ENCODE measurements at regions of chr19 and their contacts with region 1.

Region 1: GRCh38 chr19:12139885-12140547 is at the start of gene ZNF20:
- DNase-seq: peak; percentile 79 to 91 (median 86)
- H3K4me3 ChIP-seq: peak within 1 kb of the TSS; percentile 67
- H3K4me3 Mint-ChIP-seq: peak within 1 kb of the TSS; percentile 83 to 94 (median 89)
- H3K27ac ChIP-seq: peak within 1 kb of the TSS; percentile 48
- H3K27ac Mint-ChIP-seq: peak within 1 kb of the TSS; percentile 57 to 95 (median 83)
- H3K4me1 ChIP-seq: peaks cover 22% of the 10 kb centered on the region
- H3K4me1 Mint-ChIP-seq: peaks cover 33 to 41% (median 40%) of the 10 kb centered on the region in 3 donors
- H3K27me3 ChIP-seq: no peaks in the 10 kb centered on the region
- H3K27me3 Mint-ChIP-seq: no peaks in the 10 kb centered on the region
- total RNA-seq, gene ZNF20: 2.5 to 3.7 TPM

Region 2: GRCh38 chr19:11798391-11799330 is 341.4 kb before region 1 on chr19 and contains the start of gene ZNF491:
- CTCF ChIA-PET with region 1: interaction called, 14 read pairs
- POLR2A ChIA-PET with region 1: interaction called, 4 read pairs
- DNase-seq: peak; percentile 71 to 86 (median 75)
- H3K4me3 ChIP-seq: peak within 1 kb of the TSS; percentile 67
- H3K4me3 Mint-ChIP-seq: peak within 1 kb of the TSS; percentile 87 to 95 (median 91)
- H3K27ac ChIP-seq: no peak within 1 kb of the TSS
- H3K27ac Mint-ChIP-seq: peak within 1 kb of the TSS; percentile 68 to 92 (median 88)
- H3K4me1 ChIP-seq: peaks cover 12% of the 10 kb centered on the region
- H3K4me1 Mint-ChIP-seq: peaks cover 12 to 20% (median 14%) of the 10 kb centered on the region in 3 donors
- H3K27me3 ChIP-seq: no peaks in the 10 kb centered on the region
- H3K27me3 Mint-ChIP-seq: peaks cover 0 to 5% of the 10 kb centered on the region in 2 donors
- total RNA-seq, gene ZNF491: 1.1 to 1.3 TPM

Region 3: DNA sequence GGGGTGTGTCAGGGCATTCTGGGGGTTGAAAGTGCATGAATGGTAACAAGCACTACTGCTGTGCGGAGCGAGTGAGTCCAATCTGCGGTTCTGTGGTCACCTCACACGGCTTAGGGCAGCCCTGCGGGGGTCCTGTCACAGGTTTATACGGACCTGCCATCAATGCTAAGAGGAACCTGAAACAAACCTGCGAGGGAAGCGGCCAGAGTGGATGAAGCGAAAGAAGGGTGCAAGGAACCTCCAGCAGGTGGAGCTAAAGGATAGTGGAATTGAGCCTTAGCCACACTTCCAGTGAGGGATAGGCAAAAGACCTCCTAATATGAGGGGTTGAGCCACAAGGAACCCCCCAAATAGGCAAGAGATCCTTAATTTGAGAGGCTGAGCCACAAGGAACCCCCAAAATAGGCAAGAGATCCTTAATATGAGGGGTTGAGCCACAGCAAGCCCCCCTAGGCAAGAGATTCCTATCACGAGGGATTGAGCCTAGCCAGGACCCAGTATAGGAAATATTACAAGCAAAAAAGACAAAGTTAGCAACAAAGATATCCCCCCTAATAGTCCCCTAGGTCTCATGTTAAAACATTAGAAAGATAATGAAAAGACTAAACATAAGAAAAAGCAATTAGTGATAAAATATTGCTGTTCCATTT is 258.7 kb before region 1 on chr19:
- CTCF ChIA-PET with region 1: interaction called, 43 read pairs
- POLR2A ChIA-PET with region 1: no interaction called
- DNase-seq: peak; percentile 29 to 69 (median 45)
- H3K4me3 ChIP-seq: no peak overlapping the region
- H3K4me3 Mint-ChIP-seq: peak overlapping the region in 1 of 7 donors; percentile 42
- H3K27ac ChIP-seq: no peak overlapping the region
- H3K27ac Mint-ChIP-seq: peak overlapping the region in 1 of 8 donors; percentile 5
- H3K4me1 ChIP-seq: no peaks in the 10 kb centered on the region
- H3K4me1 Mint-ChIP-seq: peaks cover 0 to 2% (median 2%) of the 10 kb centered on the region in 3 donors
- H3K27me3 ChIP-seq: no peaks in the 10 kb centered on the region
- H3K27me3 Mint-ChIP-seq: peaks cover 0 to 4% of the 10 kb centered on the region in 2 donors

Region 4: DNA sequence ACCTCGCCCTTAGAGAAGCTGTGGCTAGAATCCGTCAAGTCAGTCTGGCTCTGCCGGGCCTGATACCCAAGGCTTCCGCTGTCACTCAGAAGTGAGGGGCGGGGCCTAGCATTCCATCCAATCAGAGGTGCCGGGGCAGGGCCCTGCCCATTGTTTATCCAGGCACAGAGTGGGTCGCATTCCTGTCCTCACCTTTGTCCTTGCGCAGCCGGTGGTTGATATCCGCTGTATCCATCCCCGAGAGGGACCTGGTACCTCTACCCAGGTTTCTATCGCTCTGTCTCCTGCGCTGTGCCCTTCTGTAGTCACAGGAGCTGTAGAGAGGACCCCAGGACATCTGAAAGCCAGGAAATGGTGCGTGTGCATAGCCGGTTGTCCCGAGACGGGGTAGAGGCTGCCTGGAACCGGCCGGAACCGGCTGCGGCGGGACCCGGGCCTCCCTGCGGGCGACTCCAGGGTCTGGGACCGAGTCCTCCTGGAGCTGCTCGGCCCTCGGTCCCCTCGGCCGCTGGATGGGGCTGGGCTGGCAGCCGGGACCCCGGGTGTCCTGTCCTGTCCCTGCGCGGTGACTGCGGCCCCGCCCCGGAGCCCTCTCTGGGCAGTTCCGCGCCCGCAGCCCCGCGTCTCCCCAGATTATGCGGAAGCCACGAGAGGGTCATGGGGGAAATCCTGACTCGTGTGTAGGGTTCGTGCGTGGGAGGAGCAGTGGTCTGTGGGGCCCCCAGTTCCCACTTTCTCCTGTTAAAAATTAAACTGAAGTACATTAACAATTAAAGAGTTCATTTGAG is 175.0 kb before region 1 on chr19 and contains the start of gene ZNF763:
- CTCF ChIA-PET with region 1: interaction called, 12 read pairs
- POLR2A ChIA-PET with region 1: no interaction called
- DNase-seq: peak; percentile 82 to 92 (median 85)
- H3K4me3 ChIP-seq: peak within 1 kb of the TSS; percentile 100
- H3K4me3 Mint-ChIP-seq: peak within 1 kb of the TSS; percentile 90 to 98 (median 97)
- H3K27ac ChIP-seq: peak within 1 kb of the TSS; percentile 91
- H3K27ac Mint-ChIP-seq: peak within 1 kb of the TSS; percentile 89 to 98 (median 95)
- H3K4me1 ChIP-seq: peaks cover 16% of the 10 kb centered on the region
- H3K4me1 Mint-ChIP-seq: peaks cover 26 to 30% (median 29%) of the 10 kb centered on the region in 3 donors
- H3K27me3 ChIP-seq: no peaks in the 10 kb centered on the region
- H3K27me3 Mint-ChIP-seq: no peaks in the 10 kb centered on the region
- total RNA-seq, gene ZNF763: 2.0 to 2.3 TPM

Region 5: DNA sequence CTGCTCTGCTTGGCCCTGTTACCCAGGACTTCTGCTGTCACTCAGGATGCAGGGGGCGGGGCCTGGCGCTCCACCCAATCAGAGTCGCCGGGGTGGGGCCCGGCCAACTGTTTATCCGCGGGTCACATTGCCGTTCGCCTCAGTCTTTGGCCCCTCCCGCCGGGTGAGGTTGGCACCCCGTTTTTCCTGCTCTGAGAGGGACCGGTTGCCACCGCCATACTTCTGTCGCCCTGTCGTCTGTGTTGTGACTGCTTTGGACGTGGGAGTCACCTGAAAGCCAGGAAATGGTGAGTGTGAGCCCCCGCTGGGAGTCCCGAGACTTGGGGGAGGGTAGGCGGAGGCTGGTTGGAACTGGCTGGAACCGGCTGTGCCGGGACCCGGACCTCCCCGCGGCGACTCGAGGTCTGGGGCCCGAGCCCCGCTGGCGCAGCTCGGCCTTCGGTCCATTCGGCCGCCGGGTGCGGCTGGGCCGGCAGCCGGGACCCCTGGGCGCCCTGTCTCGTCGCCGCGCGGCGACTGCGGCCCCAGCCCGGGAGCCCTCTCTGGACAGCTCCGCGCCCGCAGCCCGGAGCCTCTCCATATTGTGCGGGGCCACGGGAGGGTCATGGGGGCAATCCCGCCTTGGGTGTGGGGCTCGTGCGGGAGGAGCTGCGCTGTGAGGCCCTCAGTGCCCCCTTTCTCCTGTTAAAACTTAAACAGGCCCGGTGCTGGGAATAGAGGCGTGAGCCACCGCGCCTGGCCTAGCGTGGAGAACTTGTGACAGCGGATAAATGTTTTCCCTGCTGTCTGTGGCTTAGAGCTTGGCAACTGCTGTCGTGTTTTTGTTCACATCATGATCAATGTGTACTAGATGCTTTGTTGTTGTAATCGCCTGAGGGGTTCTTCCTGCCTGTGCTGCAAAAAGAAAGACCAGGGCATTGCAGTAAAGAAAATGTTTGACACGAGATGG is 75.2 kb before region 1 on chr19 and contains the start of gene ZNF844:
- CTCF ChIA-PET with region 1: interaction called, 15 read pairs
- POLR2A ChIA-PET with region 1: no interaction called
- DNase-seq: peak; percentile 46 to 76 (median 52)
- H3K4me3 ChIP-seq: peak within 1 kb of the TSS; percentile 66
- H3K4me3 Mint-ChIP-seq: peak within 1 kb of the TSS; percentile 80 to 91 (median 85)
- H3K27ac ChIP-seq: peak within 1 kb of the TSS; percentile 51
- H3K27ac Mint-ChIP-seq: peak within 1 kb of the TSS in 6 of 8 donors; percentile 60 to 95 (median 66)
- H3K4me1 ChIP-seq: no peaks in the 10 kb centered on the region
- H3K4me1 Mint-ChIP-seq: peaks cover 5 to 16% (median 14%) of the 10 kb centered on the region in 3 donors
- H3K27me3 ChIP-seq: no peaks in the 10 kb centered on the region
- H3K27me3 Mint-ChIP-seq: no peaks in the 10 kb centered on the region
- total RNA-seq, gene ZNF844: 5.4 to 5.7 TPM

Region 6: DNA sequence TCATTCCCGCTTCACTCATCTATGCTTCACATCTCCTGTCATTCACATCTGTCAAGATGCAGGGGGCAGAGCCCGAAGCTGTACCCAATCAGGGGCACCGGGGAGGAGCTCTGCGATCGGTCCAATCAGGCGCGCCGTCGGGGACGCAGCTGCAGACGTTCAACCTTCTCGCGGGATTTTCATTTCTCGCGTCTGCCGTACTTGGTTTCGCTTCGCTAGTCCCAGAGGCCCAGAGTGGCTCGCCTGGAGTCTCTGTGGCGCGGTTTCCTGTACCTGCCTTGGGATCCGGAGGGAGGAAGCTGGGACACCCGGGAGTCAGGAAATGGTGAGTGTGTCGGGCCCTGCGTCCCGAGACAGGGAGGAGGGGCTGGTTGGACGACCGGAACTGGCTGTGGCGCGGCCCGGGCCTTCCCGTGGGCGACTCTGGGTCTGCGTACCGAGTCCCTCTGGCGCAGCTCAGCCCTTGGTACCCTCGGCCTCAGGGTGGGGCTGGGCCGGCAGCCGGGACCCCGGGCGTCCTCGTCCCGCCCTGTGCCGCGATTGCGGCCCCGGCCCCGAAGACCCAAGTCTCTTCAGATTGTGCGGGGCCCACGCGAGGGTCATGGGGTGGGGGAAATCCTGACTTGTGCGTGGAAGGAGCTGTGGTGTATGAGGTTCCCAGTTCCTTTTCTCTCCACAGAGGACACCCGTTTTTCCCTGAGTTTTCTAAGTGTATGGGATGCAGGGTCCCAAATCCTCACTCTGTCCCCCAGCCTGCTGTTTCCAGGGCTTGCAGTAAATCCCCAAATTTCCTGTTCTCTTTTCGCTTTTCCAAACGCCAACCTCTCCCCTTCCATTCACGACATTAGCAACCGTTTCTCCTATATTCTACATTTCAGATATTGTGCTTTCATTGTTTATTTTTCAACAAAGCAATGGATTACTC is 23.1 kb after region 1 on chr19 and contains the start of gene ZNF136:
- CTCF ChIA-PET with region 1: interaction called, 12 read pairs
- POLR2A ChIA-PET with region 1: no interaction called
- DNase-seq: peak; percentile 88 to 96 (median 90)
- H3K4me3 ChIP-seq: peak within 1 kb of the TSS; percentile 69
- H3K4me3 Mint-ChIP-seq: peak within 1 kb of the TSS; percentile 86 to 100 (median 97)
- H3K27ac ChIP-seq: peak within 1 kb of the TSS; percentile 90
- H3K27ac Mint-ChIP-seq: peak within 1 kb of the TSS; percentile 66 to 100 (median 99)
- H3K4me1 ChIP-seq: peaks cover 24% of the 10 kb centered on the region
- H3K4me1 Mint-ChIP-seq: peaks cover 41 to 53% (median 51%) of the 10 kb centered on the region in 3 donors
- H3K27me3 ChIP-seq: no peaks in the 10 kb centered on the region
- H3K27me3 Mint-ChIP-seq: peaks cover 0 to under 1% of the 10 kb centered on the region in 2 donors
- total RNA-seq, gene ZNF136: 13.0 to 16.0 TPM